Lower leg skin (tissue), 4 donors: ENCODE measurements at regions of chr15 and their contacts with region 1.

Region 1: DNA sequence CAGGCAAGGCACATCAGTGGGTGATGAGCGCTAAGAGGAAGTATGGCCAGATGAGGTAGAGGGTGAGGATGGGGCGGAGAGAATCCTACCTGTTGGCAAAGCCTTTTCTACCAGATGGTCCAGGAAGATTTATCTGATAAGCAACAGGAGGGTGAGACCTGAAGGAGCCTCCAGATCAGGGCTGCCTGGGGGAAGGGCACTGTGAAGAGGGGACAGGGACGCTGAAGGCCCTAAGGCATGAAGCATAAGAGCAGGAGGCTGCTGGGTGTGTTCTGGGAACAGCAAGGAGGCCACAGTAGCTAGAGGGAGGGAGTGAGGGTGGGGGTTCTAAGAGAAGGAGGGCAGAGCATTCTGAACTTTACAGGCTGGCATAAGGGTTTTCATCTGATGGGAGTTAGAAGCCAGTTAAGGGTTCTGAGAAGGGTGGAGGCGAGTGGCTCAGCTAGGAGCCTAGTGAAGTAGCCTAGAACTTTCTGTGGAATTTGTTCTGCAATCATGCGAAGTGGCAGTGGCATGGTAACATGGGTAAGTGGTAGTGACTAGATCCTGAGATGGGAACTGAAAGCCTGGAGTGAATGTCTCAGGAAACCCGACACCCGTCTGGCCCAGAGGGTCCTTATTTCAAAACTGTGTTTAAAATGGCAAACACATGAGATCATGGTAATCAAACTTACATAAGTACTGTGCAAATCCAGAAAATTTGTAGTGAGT is 29.9 kb downstream of the CGNL1 start:
- DNase-seq: no peak
- H3K4me3 ChIP-seq: no peak overlapping the region
- CTCF ChIP-seq: no peak
- POLR2A ChIP-seq: no peak

Region 2: DNA sequence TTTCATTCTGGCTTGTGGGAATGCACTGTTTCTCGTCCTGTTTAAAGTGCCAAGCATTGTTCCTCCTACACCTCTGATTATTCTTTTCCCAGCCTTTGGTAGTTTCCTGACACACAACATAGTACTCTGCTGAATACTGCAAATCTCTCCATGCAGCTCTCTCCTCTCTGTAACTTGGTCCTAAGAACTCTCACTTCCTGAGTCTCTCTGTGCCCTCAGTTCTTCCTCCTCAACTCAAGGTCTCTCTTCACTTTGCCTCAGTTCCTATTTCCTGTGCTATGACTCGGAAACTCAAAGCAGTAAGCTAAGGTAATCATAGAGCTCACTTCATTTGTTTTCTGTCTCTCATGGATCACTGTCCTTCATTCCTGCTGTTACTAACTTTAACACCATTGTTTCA is 786.3 kb before region 1 on chr15:
- intact Hi-C with region 1: no loop called
- DNase-seq: no peak
- H3K4me3 ChIP-seq: no peak overlapping the region
- CTCF ChIP-seq: no peak
- POLR2A ChIP-seq: no peak

Region 3: GRCh38 chr15:57281321-57281720 is 124.9 kb before region 1 on chr15:
- intact Hi-C with region 1: no loop called
- DNase-seq: no peak
- H3K4me3 ChIP-seq: no peak overlapping the region
- CTCF ChIP-seq: no peak
- POLR2A ChIP-seq: no peak

Region 4: DNA sequence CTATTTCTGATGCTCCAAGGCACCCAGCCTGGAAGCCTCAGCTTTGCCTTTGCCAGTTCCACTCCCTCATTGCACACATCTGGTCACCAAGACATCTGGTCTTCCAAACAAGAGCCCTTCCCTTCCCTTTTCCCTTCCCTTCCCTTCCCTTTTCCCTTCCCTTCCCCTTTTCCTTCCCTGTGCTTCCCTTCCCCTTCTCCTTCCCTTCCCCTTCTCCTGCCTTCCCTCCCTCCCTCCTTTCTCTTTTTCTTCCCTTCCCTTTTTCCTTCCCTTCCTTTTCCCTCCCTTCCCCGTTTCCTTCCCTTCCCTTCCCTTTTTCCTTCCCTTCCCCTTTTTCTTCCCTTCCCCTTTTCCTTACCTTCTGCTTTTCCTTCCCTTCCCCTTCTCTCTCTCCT is 32.3 kb before region 1 on chr15:
- intact Hi-C with region 1: loop called (anchors 1 kb)
- DNase-seq: no peak
- H3K4me3 ChIP-seq: no peak overlapping the region
- CTCF ChIP-seq: no peak
- POLR2A ChIP-seq: no peak

Region 5: DNA sequence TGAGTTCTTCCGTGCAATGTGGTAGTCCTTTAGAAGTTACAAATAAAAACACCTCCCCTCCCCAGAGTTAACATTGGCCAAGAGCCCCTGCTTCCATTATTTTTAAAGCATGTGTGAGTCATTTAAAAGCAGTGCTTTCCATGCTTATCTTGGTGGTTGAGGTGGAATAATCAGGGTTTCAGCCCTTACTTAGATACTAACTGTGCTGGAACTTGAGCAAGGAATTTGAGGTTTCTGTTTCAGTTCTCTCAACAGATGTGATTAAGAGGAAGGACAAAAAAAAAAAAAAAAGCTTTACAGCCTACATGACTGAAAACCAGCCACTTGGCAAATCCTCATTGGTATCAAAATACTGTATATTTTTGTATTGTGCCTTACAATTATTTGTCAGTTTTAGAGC is 34.6 kb after region 1 on chr15:
- intact Hi-C with region 1: no loop called
- DNase-seq: no peak
- H3K4me3 ChIP-seq: no peak overlapping the region
- CTCF ChIP-seq: no peak
- POLR2A ChIP-seq: no peak